Right ventricle myocardium inferior (tissue), 1 donor: ENCODE measurements at regions of chr5 and their contacts with region 1.

Region 1: DNA sequence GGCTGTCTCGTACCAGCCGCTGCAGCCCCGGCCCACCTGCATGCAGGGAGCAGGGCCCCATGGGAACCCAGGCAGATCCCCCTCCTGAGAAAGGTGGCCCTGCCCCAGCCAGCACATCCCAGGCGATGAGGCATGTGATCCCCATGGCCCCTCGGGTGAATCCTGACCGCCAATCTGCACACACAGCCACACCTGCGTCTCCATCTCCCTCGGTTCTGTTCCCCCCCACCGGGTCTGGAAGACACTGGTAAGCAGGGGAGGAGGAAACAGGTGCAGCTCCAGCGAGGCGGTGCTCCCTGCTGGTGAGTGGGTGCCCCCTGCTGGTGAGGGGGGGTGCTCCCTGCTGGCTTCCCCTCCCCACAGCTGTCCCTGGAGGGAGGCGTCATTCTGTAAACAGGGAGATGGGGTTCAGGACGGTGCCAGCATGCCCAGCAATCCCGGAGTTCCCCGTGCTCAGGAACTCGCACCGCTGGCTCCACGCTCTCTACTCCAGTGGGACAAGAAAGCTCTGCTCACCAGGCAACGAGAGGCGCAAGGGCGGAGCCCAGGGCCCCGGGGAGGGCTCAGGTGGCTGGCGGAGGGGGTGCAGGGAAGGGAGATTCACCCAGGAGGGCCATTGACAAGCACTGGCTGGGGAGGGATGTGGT is 28.4 kb upstream of the SLC12A7 start:
- DNase-seq: peak; percentile 81
- ATAC-seq: peak; percentile 85

Region 2: GRCh38 chr5:1004461-1005248 is 135.6 kb before region 1 on chr5:
- intact Hi-C with region 1: loop called (anchors 2 kb)
- DNase-seq: peak; percentile 92
- ATAC-seq: peak; percentile 80

Region 3: DNA sequence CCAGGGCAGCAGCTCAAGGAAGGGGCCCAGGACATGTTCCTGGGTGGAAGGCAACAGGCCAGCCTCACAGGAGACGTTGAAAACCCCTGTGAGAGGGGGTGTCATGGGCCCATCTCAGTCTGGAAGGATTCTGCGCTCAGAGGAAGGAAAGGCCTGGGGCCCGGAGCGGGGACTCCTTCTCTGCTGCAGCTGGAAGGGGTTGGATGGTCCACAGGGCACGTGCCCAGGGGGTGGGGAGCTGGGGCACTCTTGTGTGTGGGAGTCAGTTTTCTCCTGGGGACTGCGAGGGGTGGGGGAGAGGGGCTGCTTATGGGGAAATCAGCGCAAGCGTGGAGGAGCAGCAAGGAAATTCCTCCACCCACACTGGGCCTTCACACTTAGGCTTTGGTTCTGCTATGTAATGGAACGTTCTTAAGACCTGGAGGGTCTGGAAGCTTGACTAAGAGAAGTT is 386.4 kb after region 1 on chr5:
- intact Hi-C with region 1: no loop called
- DNase-seq: no peak
- ATAC-seq: no peak